Posterior cingulate gyrus (tissue), 11 donors: ENCODE measurements at regions of chr5 and their contacts with region 1.

Region 1: GRCh38 chr5:95730730-95731570 is at the start of gene RHOBTB3:
- DNase-seq: peak; percentile 80 to 97 (median 86)

Region 2: GRCh38 chr5:95669540-95669939 is 61.4 kb before region 1 on chr5:
- intact Hi-C with region 1: loop called (anchors 2 kb)
- DNase-seq: peak; percentile 14 to 94 (median 52)